ENCODE measurements at regions of chr19 and their contacts with region 1.

Region 1: DNA sequence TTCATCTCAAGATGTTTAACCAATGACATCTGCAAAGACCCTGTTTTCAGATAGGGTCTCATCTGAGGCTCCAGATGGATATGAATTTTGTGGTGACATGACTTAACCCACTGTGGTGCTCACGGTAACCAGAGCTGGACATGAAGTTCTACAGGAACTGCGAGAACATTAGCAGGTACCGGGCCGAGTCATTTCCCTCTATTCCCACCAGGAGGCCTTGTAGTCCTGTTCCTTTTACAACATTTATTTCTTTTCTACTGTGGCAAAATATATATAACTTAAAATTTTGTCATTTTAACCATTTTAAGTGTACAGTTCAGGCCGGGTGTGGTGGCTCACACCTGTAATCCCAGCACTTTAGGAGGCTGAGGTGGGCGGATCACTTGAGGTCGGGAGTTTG is 7.6 kb upstream of the TSPAN16 start:
- DNase-seq: no peak

Region 2: DNA sequence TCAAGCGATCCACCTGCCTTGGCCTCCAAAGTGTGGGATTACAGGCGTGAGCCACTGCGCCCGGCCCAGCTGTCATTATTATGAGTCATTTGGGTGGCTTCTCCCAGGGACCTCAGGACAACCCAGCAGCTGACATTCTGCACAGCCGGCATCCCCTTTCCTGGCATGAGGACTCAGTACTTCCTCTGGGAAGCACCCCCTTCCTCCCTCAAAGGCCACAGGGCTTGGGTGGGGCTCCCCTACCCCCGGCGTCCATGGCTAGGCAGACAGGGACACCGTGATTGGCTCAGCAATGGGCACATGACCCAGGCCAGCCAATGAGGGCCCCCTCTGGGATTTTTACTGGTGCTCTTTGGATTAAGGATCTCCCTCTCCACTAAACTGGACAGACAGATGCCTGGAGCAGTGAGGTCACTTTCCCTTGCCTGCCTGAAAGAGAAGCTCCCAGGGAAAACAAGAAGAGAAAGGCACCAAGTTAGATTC is 97.0 kb before region 1 on chr19:
- intact Hi-C with region 1: no loop called
- DNase-seq: peak; percentile 86

Region 3: DNA sequence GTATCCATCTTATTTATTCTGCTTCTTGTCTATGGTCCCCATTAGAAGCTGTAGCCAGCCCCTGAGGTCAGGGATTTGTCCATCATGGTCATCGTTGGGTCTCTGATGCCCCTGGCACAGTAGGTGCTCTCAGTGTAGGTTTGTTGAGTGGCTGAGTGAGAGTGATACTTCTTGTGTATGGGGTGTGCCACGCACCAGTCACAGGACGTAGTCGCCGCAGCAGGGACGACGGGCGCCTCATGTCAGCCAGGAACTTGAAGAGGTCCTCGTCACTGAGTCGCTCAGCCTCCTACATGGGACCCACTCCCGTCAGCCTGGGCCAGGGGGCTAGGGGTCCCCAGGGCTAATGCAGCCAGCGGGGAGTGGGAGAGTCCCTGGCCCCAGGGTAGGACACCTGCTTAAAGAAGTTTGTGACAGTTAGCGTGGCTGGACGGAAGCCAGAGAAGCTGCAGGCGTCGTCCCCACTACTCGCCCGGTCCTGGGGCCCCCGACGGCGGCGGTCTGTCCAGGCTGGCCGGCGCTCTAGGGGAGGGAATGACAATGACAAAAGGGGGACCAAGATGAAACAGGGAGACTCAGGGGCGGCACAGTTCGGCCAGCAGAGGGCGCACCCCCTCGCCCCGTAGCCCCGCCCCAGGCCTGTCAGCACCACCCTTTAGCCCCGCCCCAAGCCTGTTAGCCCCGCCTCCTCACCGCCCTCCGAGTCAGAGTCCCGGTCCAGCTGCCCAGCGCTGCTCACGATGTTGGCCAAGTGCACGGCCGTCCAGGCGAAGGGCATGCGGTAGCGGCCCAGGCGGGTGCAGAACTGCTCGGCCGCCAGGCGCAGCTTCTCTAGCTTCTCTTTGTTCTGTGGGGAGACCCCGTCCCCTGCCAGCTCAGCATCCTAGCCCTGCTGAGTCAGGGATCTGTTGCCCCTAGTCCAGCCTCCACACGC is 45.2 kb before region 1 on chr19:
- intact Hi-C with region 1: loop called (anchors 5 kb)
- DNase-seq: peak; percentile 97

Measured in cardiac septum (tissue), 1 donor.